ENCODE measurements at regions of chr2 and their contacts with region 1.

Region 1: DNA sequence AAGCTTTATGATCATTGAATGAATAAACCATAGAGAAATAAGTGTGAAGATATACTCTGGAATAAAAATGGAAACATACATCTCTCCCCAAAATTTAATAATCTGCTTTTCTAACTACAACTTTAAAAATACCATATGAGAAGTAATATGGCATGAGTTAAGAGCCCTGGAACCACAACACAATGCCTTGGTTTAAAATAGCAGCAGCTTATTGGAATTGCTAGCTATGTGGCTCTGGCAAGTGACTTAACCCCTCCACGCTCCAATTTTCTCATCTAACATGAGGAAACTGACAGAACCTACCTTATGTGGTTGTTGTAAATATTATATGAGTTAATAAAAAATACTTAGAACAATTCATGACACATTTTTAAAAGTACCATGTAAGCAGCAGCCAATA is 76.4 kb downstream of the VPS54 start:
- DNase-seq: no peak
- ATAC-seq: peak in 1 of 4 donors; percentile 54
- H3K4me3 ChIP-seq: no peak overlapping the region
- H3K27ac ChIP-seq: no peak overlapping the region
- H3K4me1 ChIP-seq: peaks cover 5% of the 10 kb centered on the region
- H3K27me3 ChIP-seq: no peaks in the 10 kb centered on the region
- CTCF ChIP-seq: no peak

Region 2: DNA sequence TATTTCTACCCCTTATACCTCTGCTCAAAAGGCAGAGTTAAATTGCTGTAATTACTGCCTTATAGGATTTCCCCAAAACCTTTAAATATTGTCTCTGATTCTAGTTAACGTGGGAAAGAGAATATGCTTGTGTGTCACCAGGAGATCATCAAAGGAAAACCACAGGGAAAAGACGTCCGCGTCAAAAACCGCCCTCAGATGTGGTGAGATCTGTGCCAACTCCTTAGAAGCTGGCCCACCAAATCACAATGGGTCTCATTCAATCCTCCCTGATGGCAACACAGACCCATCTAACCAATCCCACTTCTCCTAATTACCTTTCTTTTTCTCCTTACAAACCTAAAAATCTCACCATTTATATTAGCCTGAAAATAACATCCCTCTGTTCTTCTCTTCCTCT is 51.1 kb after region 1 on chr2:
- intact Hi-C with region 1: loop called in 1 of 2 experiments (anchors 10 kb)
- DNase-seq: no peak
- ATAC-seq: no peak
- H3K4me3 ChIP-seq: no peak overlapping the region
- H3K27ac ChIP-seq: no peak overlapping the region
- H3K4me1 ChIP-seq: no peaks in the 10 kb centered on the region
- H3K27me3 ChIP-seq: no peaks in the 10 kb centered on the region
- CTCF ChIP-seq: no peak

Region 3: GRCh38 chr2:64101141-64101591 is 158.4 kb after region 1 on chr2:
- intact Hi-C with region 1: no loop called
- DNase-seq: no peak
- ATAC-seq: no peak
- H3K4me3 ChIP-seq: no peak overlapping the region
- H3K27ac ChIP-seq: no peak overlapping the region
- H3K4me1 ChIP-seq: no peaks in the 10 kb centered on the region
- H3K27me3 ChIP-seq: no peaks in the 10 kb centered on the region
- CTCF ChIP-seq: no peak